ENCODE measurements at regions of chr21 and their contacts with region 1.

Region 1: DNA sequence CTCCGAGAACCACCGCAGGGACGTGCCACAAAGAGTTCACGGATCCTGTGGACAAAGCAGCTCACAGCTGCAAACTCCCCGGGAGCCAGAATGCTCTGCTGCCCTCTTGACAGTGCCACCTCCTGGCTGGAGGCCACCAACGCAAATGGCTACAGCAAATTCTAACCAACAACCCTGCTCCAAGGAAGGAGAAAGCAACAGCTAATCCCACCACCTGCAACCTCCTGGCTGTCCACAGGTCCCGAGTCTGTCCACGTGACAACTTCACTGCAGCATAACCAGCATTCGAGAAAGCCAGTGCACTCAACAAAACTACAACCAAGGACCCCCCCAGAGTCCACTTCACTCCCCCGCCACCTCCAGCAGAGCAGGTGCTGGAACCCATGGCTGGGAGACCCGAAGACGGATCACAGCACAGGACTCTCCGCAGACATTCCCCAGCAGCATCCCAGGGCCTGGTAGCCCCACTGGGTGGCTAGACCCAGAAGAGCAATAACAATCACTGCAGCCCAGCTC is 17.3 kb downstream of the POFUT2 start:
- DNase-seq: no peak
- H3K4me3 ChIP-seq: no peak overlapping the region
- H3K27ac ChIP-seq: no peak overlapping the region
- H3K4me1 ChIP-seq: no peaks in the 10 kb centered on the region
- H3K27me3 ChIP-seq: no peaks in the 10 kb centered on the region
- CTCF ChIP-seq: no peak
- EP300 ChIP-seq: no peak
- POLR2A ChIP-seq: no peak

Region 2: DNA sequence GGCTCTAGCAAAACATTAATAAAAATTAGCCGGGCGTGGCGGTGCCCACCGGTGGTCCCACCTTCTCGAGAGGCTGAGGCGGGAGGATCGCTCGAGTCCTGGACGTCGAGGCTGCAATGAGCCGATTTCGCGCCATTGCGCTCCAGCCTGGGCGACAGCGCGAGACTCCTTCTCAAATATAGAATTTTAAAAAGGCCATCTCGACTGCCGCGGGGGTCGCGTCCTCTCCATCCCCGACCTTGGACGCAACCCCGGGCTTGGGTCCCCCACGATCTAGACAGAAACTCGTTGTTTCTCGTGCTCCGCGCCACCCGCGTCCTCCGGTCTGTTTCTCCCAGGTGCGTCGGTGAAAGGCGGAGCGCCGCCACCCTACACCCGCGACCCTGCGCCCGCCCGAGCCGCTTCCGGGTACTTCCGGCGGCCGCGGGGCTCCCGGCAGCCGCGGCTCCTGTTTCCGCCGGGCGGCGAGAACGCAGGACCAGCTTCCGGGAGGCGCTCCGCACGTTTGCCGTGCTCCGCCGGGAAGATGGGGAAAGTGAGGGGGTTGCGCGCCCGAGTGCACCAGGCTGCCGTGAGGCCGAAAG is 330.7 kb before region 1 on chr21 and contains the start of gene SLX9:
- intact Hi-C with region 1: loop called (anchors 10 kb)
- DNase-seq: no peak
- H3K4me3 ChIP-seq: peak within 1 kb of the TSS; percentile 69 to 98 (median 93)
- H3K27ac ChIP-seq: peak within 1 kb of the TSS; percentile 71 to 80 (median 73)
- H3K4me1 ChIP-seq: peaks cover 26 to 41% (median 33%) of the 10 kb centered on the region in 4 donors
- H3K27me3 ChIP-seq: peaks cover 0 to 3% (median 0%) of the 10 kb centered on the region in 4 donors
- CTCF ChIP-seq: peak in 1 of 3 experiments; percentile 17
- EP300 ChIP-seq: no peak
- POLR2A ChIP-seq: peak; percentile 68
- total RNA-seq, gene SLX9: 20.8 to 59.3 (median 27.6) TPM